ENCODE measurements at regions of chr17 and their contacts with region 1.

Region 1: GRCh38 chr17:68457539-68458259 is 403 bp upstream of the WIPI1 start:
- DNase-seq: peak; percentile 98
- H3K4me3 Mint-ChIP-seq: peak overlapping the region; percentile 78
- H3K27ac Mint-ChIP-seq: peak overlapping the region; percentile 63
- H3K4me1 Mint-ChIP-seq: peaks cover 70% of the 10 kb centered on the region
- H3K27me3 Mint-ChIP-seq: no peaks in the 10 kb centered on the region

Region 2: GRCh38 chr17:67980456-67980855 is 477.2 kb before region 1 on chr17:
- intact Hi-C with region 1: no loop called
- DNase-seq: peak; percentile 6
- H3K4me3 Mint-ChIP-seq: no peak overlapping the region
- H3K27ac Mint-ChIP-seq: no peak overlapping the region
- H3K4me1 Mint-ChIP-seq: no peaks in the 10 kb centered on the region
- H3K27me3 Mint-ChIP-seq: no peaks in the 10 kb centered on the region

Region 3: GRCh38 chr17:68057531-68057952 is 400.2 kb before region 1 on chr17:
- intact Hi-C with region 1: loop called (anchors 2 kb)
- DNase-seq: peak; percentile 46
- H3K4me3 Mint-ChIP-seq: no peak overlapping the region
- H3K27ac Mint-ChIP-seq: no peak overlapping the region
- H3K4me1 Mint-ChIP-seq: peaks cover 17% of the 10 kb centered on the region
- H3K27me3 Mint-ChIP-seq: peaks cover 9% of the 10 kb centered on the region

Region 4: DNA sequence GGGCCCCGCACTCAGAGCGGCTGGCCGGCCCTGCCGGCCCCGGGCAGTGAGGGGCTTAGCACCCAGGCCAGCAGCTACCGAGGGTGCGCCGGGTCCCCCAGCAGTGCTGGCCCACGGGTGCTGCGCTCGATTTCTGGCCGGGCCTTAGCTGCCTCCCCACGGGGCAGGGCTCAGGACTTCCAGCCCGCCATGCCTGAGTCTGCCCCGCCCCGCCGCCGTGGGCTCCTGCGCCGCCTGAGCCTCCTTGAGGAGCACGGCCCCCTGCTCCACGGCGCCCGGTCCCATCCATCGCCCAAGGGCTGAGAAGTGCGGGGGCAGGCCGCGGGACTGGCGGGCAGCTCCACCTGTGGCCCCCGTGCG is 277.8 kb before region 1 on chr17:
- intact Hi-C with region 1: loop called (anchors 2 kb)
- DNase-seq: no peak
- H3K4me3 Mint-ChIP-seq: no peak overlapping the region
- H3K27ac Mint-ChIP-seq: no peak overlapping the region
- H3K4me1 Mint-ChIP-seq: peaks cover 51% of the 10 kb centered on the region
- H3K27me3 Mint-ChIP-seq: no peaks in the 10 kb centered on the region

Region 5: GRCh38 chr17:68247445-68248198 is 210.1 kb before region 1 on chr17 and contains the start of gene AMZ2:
- intact Hi-C with region 1: loop called (anchors 1 kb)
- DNase-seq: peak; percentile 97
- H3K4me3 Mint-ChIP-seq: peak within 1 kb of the TSS; percentile 91
- H3K27ac Mint-ChIP-seq: peak within 1 kb of the TSS; percentile 94
- H3K4me1 Mint-ChIP-seq: peaks cover 39% of the 10 kb centered on the region
- H3K27me3 Mint-ChIP-seq: no peaks in the 10 kb centered on the region
- total RNA-seq, gene AMZ2: 85.9 and 111 TPM in 2 replicates

Region 6: GRCh38 chr17:68346448-68346847 is 111.3 kb before region 1 on chr17:
- intact Hi-C with region 1: loop called (anchors 5 kb)
- DNase-seq: peak; percentile 67
- H3K4me3 Mint-ChIP-seq: peak overlapping the region; percentile 59
- H3K27ac Mint-ChIP-seq: peak overlapping the region; percentile 95
- H3K4me1 Mint-ChIP-seq: peaks cover 65% of the 10 kb centered on the region
- H3K27me3 Mint-ChIP-seq: no peaks in the 10 kb centered on the region

Region 7: GRCh38 chr17:68435876-68436842 is 21.5 kb before region 1 on chr17:
- intact Hi-C with region 1: loop called (anchors 1 kb)
- DNase-seq: peak; percentile 79
- H3K4me3 Mint-ChIP-seq: peak overlapping the region; percentile 30
- H3K27ac Mint-ChIP-seq: peak overlapping the region; percentile 90
- H3K4me1 Mint-ChIP-seq: peaks cover 49% of the 10 kb centered on the region
- H3K27me3 Mint-ChIP-seq: no peaks in the 10 kb centered on the region

Region 8: GRCh38 chr17:68470961-68471360 is 13.3 kb after region 1 on chr17:
- intact Hi-C with region 1: no loop called
- DNase-seq: no peak
- H3K4me3 Mint-ChIP-seq: no peak overlapping the region
- H3K27ac Mint-ChIP-seq: no peak overlapping the region
- H3K4me1 Mint-ChIP-seq: peaks cover 4% of the 10 kb centered on the region
- H3K27me3 Mint-ChIP-seq: peaks cover 32% of the 10 kb centered on the region

Measured in activated T-helper 2 cell treated with anti-CD3 and anti-CD28 coated beads, Interferon-gamma antibody, Interleukin-2, Interleukin-4, amounts not matched to agents 10 μg/mL and 5 μg/mL and 100 μg/mL, durations not matched to agents 14 hours and 24 hours and 36 hours (primary cell).